Activated CD8-positive, alpha-beta T cell treated with anti-CD3 and anti-CD28 coated beads, Interleukin-2, amount 10 ng/mL, durations not matched to agents 7 days and 5 days (primary cell): ENCODE measurements at regions of chr19 and their contacts with region 1.

Region 1: DNA sequence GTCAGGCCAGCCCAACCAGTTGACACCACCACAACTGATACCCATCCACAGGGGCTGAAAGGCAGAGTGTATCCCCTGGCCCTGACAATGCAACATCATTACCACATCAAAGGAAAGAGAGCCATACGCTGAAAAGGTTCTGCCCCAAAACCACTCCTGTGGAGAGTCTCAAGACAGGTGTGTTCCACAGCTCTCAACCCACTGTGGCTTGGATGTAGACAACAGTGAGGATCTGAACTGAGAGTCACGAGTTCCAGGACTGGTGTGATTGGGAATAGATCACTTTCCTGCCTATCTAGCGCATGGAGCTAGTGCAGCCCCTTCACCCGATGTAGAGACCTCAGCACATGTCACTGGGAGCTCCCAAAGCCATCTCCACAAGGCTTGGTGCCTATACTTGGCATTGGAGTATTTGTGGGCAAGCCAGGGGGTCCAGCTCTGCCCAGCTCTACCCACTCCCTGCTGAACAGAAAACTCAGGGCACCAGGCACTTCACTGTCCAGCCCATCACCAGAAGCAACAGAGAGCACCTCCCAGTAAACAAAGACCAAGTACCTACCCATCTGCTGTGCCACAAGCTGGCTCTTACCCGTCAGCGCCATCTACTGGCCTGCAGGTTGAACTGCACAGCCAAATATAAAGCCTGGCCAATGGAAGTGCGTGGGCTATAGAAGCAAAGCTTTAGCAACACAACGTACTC is 579.5 kb downstream of the UQCRFS1 start:
- DNase-seq: peak; percentile 63
- ATAC-seq: peak; percentile 64
- H3K4me3 Mint-ChIP-seq: no peak overlapping the region
- H3K27ac Mint-ChIP-seq: no peak overlapping the region
- H3K4me1 Mint-ChIP-seq: peaks cover 16% of the 10 kb centered on the region
- H3K27me3 Mint-ChIP-seq: peaks cover 2% of the 10 kb centered on the region

Region 2: GRCh38 chr19:28466107-28467045 is 167.1 kb before region 1 on chr19:
- CTCF ChIA-PET with region 1: interaction called, 89 read pairs
- POLR2A ChIA-PET with region 1: interaction called, 3 read pairs
- DNase-seq: peak; percentile 77
- ATAC-seq: peak; percentile 51
- H3K4me3 Mint-ChIP-seq: no peak overlapping the region
- H3K27ac Mint-ChIP-seq: no peak overlapping the region
- H3K4me1 Mint-ChIP-seq: peaks cover 15% of the 10 kb centered on the region
- H3K27me3 Mint-ChIP-seq: no peaks in the 10 kb centered on the region

Region 3: GRCh38 chr19:28519952-28520861 is 113.3 kb before region 1 on chr19:
- CTCF ChIA-PET with region 1: no interaction called
- POLR2A ChIA-PET with region 1: no interaction called
- DNase-seq: no peak
- ATAC-seq: no peak
- H3K4me3 Mint-ChIP-seq: no peak overlapping the region
- H3K27ac Mint-ChIP-seq: no peak overlapping the region
- H3K4me1 Mint-ChIP-seq: no peaks in the 10 kb centered on the region
- H3K27me3 Mint-ChIP-seq: no peaks in the 10 kb centered on the region

Region 4: DNA sequence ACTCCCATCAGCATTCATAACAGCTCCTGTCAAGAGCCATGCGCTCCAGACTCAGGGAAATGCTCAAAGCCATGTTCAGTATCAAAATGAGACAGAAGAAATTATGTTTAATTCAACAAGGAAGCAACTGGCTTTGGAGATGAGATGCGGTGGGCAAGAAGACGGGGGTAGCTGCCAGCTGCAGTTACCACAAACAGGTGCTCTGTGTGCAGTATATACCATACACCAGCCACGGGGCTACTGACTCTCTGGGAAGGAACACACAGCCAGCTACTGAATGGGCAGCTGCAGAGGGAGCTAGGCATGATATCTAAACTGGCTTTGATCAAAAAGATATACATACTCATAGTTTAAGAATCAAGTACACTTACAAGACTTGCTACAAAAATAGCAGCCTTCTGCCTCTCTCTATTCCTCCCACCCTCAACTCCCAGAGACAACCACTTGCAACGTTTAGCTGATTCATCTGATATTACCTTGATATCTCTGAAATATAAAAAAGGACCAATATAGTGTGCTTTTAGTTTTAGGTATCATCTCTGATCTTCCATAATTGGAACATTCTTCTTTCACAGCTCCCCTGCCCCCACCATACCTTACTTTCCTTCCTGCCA is 13.5 kb before region 1 on chr19:
- CTCF ChIA-PET with region 1: interaction called, 13 read pairs
- POLR2A ChIA-PET with region 1: no interaction called
- DNase-seq: no peak
- ATAC-seq: no peak
- H3K4me3 Mint-ChIP-seq: no peak overlapping the region
- H3K27ac Mint-ChIP-seq: no peak overlapping the region
- H3K4me1 Mint-ChIP-seq: no peaks in the 10 kb centered on the region
- H3K27me3 Mint-ChIP-seq: no peaks in the 10 kb centered on the region

Region 5: GRCh38 chr19:28793391-28794168 is 160.1 kb after region 1 on chr19:
- CTCF ChIA-PET with region 1: no interaction called
- POLR2A ChIA-PET with region 1: no interaction called
- DNase-seq: no peak
- ATAC-seq: no peak
- H3K4me3 Mint-ChIP-seq: no peak overlapping the region
- H3K27ac Mint-ChIP-seq: no peak overlapping the region
- H3K4me1 Mint-ChIP-seq: peaks cover 4% of the 10 kb centered on the region
- H3K27me3 Mint-ChIP-seq: peaks cover 16% of the 10 kb centered on the region